Esophagus squamous epithelium (tissue), 5 donors: ENCODE measurements at regions of chr22 and their contacts with region 1.

Region 1: DNA sequence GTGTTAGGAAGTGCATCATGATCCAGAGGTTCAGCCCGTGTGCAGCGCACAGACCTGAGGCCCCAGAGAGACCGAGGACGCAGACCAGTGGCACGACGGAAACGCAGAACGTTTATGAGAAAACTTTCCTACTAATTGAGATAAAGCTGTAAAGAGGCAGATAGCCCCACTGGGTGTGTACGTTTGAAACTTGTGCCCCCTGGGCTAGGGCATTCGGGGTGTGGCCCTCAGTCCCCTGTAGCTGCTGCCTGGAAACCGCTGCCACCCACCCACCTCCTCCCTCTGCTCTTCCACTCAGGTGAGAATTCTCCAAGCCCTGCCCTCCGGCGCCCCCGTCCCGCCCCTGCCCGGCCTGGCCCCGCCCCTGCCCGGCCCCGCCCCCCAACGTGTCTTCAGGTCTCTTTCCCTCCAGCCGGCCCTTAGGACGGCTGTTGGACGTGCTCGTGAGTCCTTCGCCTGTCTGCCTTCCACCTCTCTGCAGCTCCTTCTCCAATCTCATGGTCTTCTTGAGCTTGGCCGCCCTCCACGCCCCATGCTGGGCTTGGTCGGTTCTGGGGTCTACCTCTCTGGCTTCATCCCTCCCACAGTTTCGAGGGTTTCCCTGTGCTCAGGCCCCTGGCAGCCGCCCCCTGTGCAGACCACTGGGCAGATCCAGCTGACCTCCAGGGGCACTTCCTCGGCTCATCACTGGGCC is 12.1 kb downstream of the MAPK8IP2 start:
- DNase-seq: no peak
- H3K4me3 ChIP-seq: no peak overlapping the region
- H3K27ac ChIP-seq: peak overlapping the region in 3 of 4 donors; percentile 50 to 73 (median 61)
- H3K4me1 ChIP-seq: peaks cover 0 to 15% (median 6%) of the 10 kb centered on the region in 3 donors
- H3K27me3 ChIP-seq: peaks cover 0 to 46% (median 0%) of the 10 kb centered on the region in 4 donors
- CTCF ChIP-seq: no peak
- POLR2A ChIP-seq: no peak

Region 2: DNA sequence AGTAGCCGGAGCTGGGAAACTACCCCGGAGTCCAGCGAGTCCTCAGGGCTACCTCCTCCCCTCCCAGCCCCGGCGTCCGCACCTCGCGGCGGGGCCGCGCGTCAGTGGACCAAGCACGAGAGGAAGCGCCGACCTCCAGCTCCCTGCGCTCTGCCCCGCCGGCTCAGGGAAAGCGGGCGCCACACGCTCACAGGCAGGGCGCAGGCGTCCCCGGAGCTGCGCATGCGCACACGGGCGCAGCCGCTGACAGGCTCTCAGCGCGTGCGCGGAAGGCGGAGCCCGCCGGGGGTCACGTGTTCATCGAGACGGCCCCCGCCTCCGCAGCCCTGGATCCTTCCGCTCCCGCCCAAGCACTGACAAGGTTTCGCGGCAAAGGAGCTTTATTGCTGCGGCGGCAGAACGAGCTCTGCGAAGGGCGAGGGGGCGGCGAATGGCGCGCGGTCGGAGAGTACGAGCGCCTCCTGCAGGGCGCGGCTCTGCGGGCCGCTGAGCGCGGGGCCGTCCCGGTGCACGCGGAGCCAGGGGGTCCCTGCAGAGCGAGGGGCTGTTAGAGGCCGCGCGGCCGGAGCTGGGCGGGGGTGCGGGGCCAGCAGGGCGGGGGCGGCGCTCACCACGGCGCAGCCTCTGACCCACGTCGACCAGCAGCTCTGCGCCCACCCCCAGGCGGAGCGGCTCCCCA is 87.1 kb before region 1 on chr22 and contains the start of gene SCO2:
- intact Hi-C with region 1: loop called (anchors 10 kb)
- DNase-seq: peak; percentile 85
- H3K4me3 ChIP-seq: peak within 1 kb of the TSS; percentile 55 to 84 (median 67)
- H3K27ac ChIP-seq: peak within 1 kb of the TSS; percentile 90 to 99 (median 95)
- H3K4me1 ChIP-seq: peaks cover 42 to 72% (median 45%) of the 10 kb centered on the region in 3 donors
- H3K27me3 ChIP-seq: peaks cover 0 to 10% (median 0%) of the 10 kb centered on the region in 4 donors
- CTCF ChIP-seq: peak in 4 of 6 experiments; percentile 27 to 66 (median 54)
- POLR2A ChIP-seq: peak in 3 of 4 donors; percentile 80 to 89 (median 80)
- total RNA-seq, gene SCO2: 5.1 to 14.9 (median 6.7) TPM